ENCODE measurements at regions of chr11 and their contacts with region 1.

Region 1: GRCh38 chr11:66677599-66678375 is at the start of gene RBM4B:
- DNase-seq: peak; percentile 89 to 96 (median 94)
- ATAC-seq: peak; percentile 94
- H3K4me3 ChIP-seq: peak within 1 kb of the TSS; percentile 100
- H3K4me3 Mint-ChIP-seq: peak within 1 kb of the TSS; percentile 87 to 98 (median 96)
- H3K27ac ChIP-seq: peak within 1 kb of the TSS; percentile 95
- H3K27ac Mint-ChIP-seq: peak within 1 kb of the TSS; percentile 94 to 100 (median 99)
- H3K4me1 ChIP-seq: peaks cover 23 to 31% of the 10 kb centered on the region in 2 donors
- H3K4me1 Mint-ChIP-seq: peaks cover 21 to 49% (median 37%) of the 10 kb centered on the region in 7 donors
- H3K27me3 ChIP-seq: no peaks in the 10 kb centered on the region
- H3K27me3 Mint-ChIP-seq: no peaks in the 10 kb centered on the region
- total RNA-seq, gene RBM4B: 9.8 to 27.2 (median 19.7) TPM

Region 2: DNA sequence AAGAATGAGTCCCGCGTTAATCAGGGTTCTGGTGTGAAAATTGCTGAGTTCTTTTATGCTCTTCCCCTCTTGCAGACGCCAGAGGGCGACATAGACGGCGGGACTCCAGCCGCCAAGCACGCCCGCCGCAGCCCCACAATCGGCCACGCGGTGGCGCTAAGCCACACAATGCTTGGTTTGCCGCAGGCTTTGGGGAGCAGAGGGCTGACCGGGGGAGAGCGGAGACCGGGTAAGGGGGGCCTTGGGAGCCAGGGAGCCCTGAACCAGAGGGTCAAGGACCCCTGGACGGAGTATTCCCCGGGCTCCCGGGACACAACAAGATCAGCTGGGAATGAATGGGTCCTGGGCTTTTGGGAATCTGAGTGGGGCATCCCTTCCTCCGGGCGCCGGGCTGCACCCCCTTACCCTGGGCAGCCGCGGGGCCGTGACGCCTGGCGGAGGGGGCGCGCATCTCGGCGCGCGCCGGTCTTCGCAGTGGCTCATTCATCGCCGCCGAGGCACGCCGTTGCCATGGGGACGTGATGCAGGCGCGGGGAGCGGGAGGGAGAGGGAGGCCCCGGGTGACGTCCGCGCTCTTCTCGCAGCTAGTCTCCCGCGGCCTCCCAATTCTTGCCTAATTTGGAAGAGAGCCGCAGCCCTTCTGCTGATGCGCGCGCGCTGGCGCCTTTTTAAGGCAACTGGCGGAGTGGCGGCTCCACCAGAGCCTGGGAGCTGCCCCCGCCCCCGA is 269.1 kb before region 1 on chr11:
- CTCF ChIA-PET with region 1: interaction called, 32 read pairs
- POLR2A ChIA-PET with region 1: interaction called, 9 read pairs
- intact Hi-C with region 1: loop called in 1 of 2 experiments (anchors 1 kb)
- DNase-seq: peak; percentile 81 to 98 (median 88)
- ATAC-seq: peak; percentile 98
- H3K4me3 ChIP-seq: peak overlapping the region; percentile 51
- H3K4me3 Mint-ChIP-seq: peak overlapping the region; percentile 42 to 86 (median 84)
- H3K27ac ChIP-seq: no peak overlapping the region
- H3K27ac Mint-ChIP-seq: peak overlapping the region in 3 of 9 donors; percentile 4 to 75 (median 20)
- H3K4me1 ChIP-seq: peaks cover 4 to 5% of the 10 kb centered on the region in 2 donors
- H3K4me1 Mint-ChIP-seq: peaks cover 0 to 5% (median 4%) of the 10 kb centered on the region in 7 donors
- H3K27me3 ChIP-seq: no peaks in the 10 kb centered on the region
- H3K27me3 Mint-ChIP-seq: peaks cover 17 to 35% (median 28%) of the 10 kb centered on the region in 5 donors

Region 3: GRCh38 chr11:66480117-66480938 is 197.5 kb before region 1 on chr11 and contains the start of gene DPP3:
- CTCF ChIA-PET with region 1: interaction called, 6 read pairs
- POLR2A ChIA-PET with region 1: interaction called, 5 read pairs
- intact Hi-C with region 1: loop called in 1 of 2 experiments (anchors 1 kb)
- DNase-seq: peak; percentile 87 to 97 (median 95)
- ATAC-seq: peak; percentile 99
- H3K4me3 ChIP-seq: peak within 1 kb of the TSS; percentile 86
- H3K4me3 Mint-ChIP-seq: peak within 1 kb of the TSS; percentile 86 to 92 (median 90)
- H3K27ac ChIP-seq: peak within 1 kb of the TSS; percentile 90
- H3K27ac Mint-ChIP-seq: peak within 1 kb of the TSS; percentile 75 to 91 (median 90)
- H3K4me1 ChIP-seq: peaks cover 9 to 14% of the 10 kb centered on the region in 2 donors
- H3K4me1 Mint-ChIP-seq: peaks cover 9 to 37% (median 17%) of the 10 kb centered on the region in 7 donors
- H3K27me3 ChIP-seq: no peaks in the 10 kb centered on the region
- H3K27me3 Mint-ChIP-seq: no peaks in the 10 kb centered on the region
- total RNA-seq, gene DPP3: 15.8 to 75.7 (median 19.4) TPM

Region 4: GRCh38 chr11:66568124-66568916 is 109.5 kb before region 1 on chr11 and contains the start of gene CTSF:
- CTCF ChIA-PET with region 1: interaction called, 20 read pairs
- POLR2A ChIA-PET with region 1: interaction called, 18 read pairs
- intact Hi-C with region 1: no loop called
- DNase-seq: peak; percentile 55 to 72 (median 61)
- ATAC-seq: peak; percentile 93
- H3K4me3 ChIP-seq: peak within 1 kb of the TSS; percentile 65
- H3K4me3 Mint-ChIP-seq: peak within 1 kb of the TSS; percentile 77 to 89 (median 82)
- H3K27ac ChIP-seq: peak within 1 kb of the TSS; percentile 58
- H3K27ac Mint-ChIP-seq: peak within 1 kb of the TSS in 8 of 9 donors; percentile 77 to 90 (median 82)
- H3K4me1 ChIP-seq: peaks cover 0 to 6% of the 10 kb centered on the region in 2 donors
- H3K4me1 Mint-ChIP-seq: peaks cover 2 to 13% (median 8%) of the 10 kb centered on the region in 7 donors
- H3K27me3 ChIP-seq: no peaks in the 10 kb centered on the region
- H3K27me3 Mint-ChIP-seq: peaks cover 0 to 36% (median 0%) of the 10 kb centered on the region in 5 donors
- total RNA-seq, gene CTSF: 2.3 to 49.7 (median 21.1) TPM

Region 5: DNA sequence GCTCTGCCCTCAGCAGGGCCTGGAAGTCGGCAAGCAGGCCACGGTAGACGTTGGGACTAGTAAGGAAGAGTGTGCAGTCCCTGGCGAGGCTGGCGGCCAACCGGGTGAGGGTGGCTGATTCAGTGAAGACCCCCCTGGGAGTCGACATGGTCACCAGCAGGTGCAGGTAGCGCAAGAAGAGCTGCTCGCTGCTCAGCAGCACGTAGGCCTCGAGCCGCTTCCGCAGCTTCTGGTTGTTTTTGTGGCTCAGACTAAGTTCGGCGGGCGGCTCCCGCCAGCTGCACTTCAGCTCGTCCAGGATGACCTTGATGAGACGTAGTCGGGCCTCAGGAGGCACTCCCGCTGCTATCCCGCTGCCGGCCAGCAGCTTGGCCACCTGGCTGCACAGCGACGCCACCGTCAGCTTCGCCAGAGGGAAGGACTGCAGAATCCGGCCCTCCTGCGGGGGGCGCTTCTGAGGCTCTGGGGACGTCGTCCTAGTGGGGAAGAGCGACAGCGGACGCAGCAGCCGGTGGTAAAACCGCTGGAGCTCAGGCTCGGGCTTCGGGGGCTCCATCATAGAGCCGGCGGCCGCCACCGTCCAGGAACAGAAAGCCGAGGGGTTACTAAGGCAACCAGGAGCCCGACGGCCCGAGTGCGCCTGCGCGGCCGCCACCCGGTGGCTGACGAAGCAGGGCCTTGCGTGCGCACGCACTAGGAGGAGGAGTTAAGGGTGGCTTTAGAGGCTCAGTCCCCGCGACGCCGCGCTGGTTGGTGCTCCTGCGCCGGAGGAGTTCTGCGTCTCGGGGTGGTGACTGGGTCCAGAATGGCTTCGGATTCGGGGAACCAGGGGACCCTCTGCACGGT is 85.1 kb before region 1 on chr11 and contains the starts of genes CCDC87 and CCS:
- CTCF ChIA-PET with region 1: interaction called, 20 read pairs
- POLR2A ChIA-PET with region 1: interaction called, 30 read pairs
- intact Hi-C with region 1: loop called (anchors 1 kb)
- DNase-seq: peak; percentile 94 to 98 (median 96)
- ATAC-seq: peak; percentile 98
- H3K4me3 ChIP-seq: peak within 1 kb of the TSS; percentile 98
- H3K4me3 Mint-ChIP-seq: peak within 1 kb of the TSS; percentile 89 to 100 (median 98)
- H3K27ac ChIP-seq: peak within 1 kb of the TSS; percentile 94
- H3K27ac Mint-ChIP-seq: peak within 1 kb of the TSS; percentile 90 to 100 (median 97)
- H3K4me1 ChIP-seq: peaks cover 9 to 30% of the 10 kb centered on the region in 2 donors
- H3K4me1 Mint-ChIP-seq: peaks cover 13 to 40% (median 28%) of the 10 kb centered on the region in 7 donors
- H3K27me3 ChIP-seq: no peaks in the 10 kb centered on the region
- H3K27me3 Mint-ChIP-seq: no peaks in the 10 kb centered on the region
- total RNA-seq, gene CCDC87: 0.11 to 1.2 (median 0.60) TPM in 4 of 5 experiments, not detected in the other
- total RNA-seq, gene CCS: 32.8 to 63.5 (median 42.5) TPM

Region 6: GRCh38 chr11:66663741-66664296 is 14.0 kb before region 1 on chr11:
- CTCF ChIA-PET with region 1: interaction called, 4 read pairs
- POLR2A ChIA-PET with region 1: interaction called, 13 read pairs
- intact Hi-C with region 1: no loop called
- DNase-seq: no peak
- ATAC-seq: peak; percentile 12
- H3K4me3 ChIP-seq: no peak overlapping the region
- H3K4me3 Mint-ChIP-seq: no peak overlapping the region
- H3K27ac ChIP-seq: no peak overlapping the region
- H3K27ac Mint-ChIP-seq: peak overlapping the region in 2 of 9 donors; percentile 17 to 36
- H3K4me1 ChIP-seq: no peaks in the 10 kb centered on the region
- H3K4me1 Mint-ChIP-seq: peaks cover 17 to 54% (median 49%) of the 10 kb centered on the region in 7 donors
- H3K27me3 ChIP-seq: no peaks in the 10 kb centered on the region
- H3K27me3 Mint-ChIP-seq: no peaks in the 10 kb centered on the region

Region 7: GRCh38 chr11:66842896-66843775 is 165.3 kb after region 1 on chr11 and contains the start of gene RCE1:
- CTCF ChIA-PET with region 1: no interaction called
- POLR2A ChIA-PET with region 1: interaction called, 19 read pairs
- intact Hi-C with region 1: loop called in 1 of 2 experiments (anchors 1 kb)
- DNase-seq: peak; percentile 86 to 96 (median 91)
- ATAC-seq: peak; percentile 96
- H3K4me3 ChIP-seq: peak within 1 kb of the TSS; percentile 94
- H3K4me3 Mint-ChIP-seq: peak within 1 kb of the TSS; percentile 87 to 97 (median 93)
- H3K27ac ChIP-seq: peak within 1 kb of the TSS; percentile 96
- H3K27ac Mint-ChIP-seq: peak within 1 kb of the TSS; percentile 74 to 97 (median 92)
- H3K4me1 ChIP-seq: peaks cover 31 to 47% of the 10 kb centered on the region in 2 donors
- H3K4me1 Mint-ChIP-seq: peaks cover 31 to 58% (median 47%) of the 10 kb centered on the region in 7 donors
- H3K27me3 ChIP-seq: no peaks in the 10 kb centered on the region
- H3K27me3 Mint-ChIP-seq: no peaks in the 10 kb centered on the region
- total RNA-seq, gene RCE1: 24.6 to 47.1 (median 33.6) TPM

Measured in naive thymus-derived CD4-positive, alpha-beta T cell (primary cell).